ENCODE measurements at regions of chr6 and their contacts with region 1.

Region 1: DNA sequence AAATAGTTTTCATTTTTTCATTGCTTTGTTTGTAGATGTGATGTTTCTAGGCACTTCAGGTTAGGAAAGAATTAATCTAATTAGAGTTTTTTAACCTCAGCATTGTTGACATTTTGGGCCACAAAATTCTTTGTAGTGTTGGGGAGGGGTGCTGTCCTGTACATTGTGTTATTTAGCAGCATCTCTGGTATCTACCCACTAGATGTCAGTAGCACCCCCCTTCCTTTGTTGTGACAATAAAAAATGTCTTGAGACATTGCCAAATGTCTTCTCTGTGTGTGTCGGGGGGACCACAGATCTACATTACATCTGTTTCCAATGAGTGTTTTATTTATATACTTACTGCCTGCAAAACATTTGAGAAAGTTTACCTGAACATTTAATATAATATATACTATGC is 45.6 kb downstream of the EYA4 start:
- DNase-seq: peak; percentile 27
- ATAC-seq: peak; percentile 44; the same call in 1 of the 2 replicates
- H3K4me3 ChIP-seq: no peak overlapping the region
- H3K27ac ChIP-seq: no peak overlapping the region
- H3K4me1 ChIP-seq: no peaks in the 10 kb centered on the region
- H3K27me3 ChIP-seq: no peaks in the 10 kb centered on the region
- CTCF ChIP-seq: peak; percentile 48
- POLR2A ChIP-seq: no peak
- RAD21 ChIP-seq: peak; percentile 58

Region 2: DNA sequence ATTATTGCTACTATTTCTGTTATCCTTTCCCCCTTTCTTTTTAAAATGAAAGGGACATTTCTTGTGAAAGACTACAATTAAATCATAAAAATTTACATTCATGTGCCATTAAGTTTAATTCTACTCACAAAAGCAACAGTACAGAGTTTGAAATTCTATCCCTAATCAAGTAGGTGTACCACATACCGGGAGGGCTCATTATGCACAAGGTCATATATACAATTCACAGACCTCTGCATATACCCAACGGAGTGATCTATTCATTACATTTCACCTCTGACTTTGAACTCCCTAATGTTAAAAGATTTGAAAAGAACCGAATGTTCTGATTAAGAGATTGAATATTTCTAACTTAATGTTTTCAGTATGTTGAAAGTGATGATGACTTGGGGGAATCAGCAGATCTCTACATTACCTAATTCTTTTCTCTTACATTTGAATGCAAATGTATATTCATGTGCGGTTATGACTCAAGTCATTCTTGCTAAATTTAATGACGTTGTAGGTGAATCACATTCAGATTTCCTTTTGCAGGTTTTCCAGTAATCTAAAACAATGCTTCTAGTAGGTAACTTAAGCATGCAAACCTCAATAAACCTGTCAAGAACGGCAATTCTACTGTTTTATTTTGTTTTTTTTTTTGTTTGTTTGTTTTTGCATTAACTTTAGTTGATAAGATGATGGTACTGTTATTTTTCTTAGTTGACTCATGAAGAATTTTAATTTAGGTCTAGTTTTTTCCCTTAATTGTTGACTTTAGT is 38.3 kb before region 1 on chr6:
- CTCF ChIA-PET with region 1: no interaction called
- POLR2A ChIA-PET with region 1: no interaction called
- dilution Hi-C with region 1: no loop called
- in situ Hi-C with region 1: no loop called
- intact Hi-C with region 1: loop called (anchors 5 kb)
- DNase-seq: peak; percentile 96
- ATAC-seq: peak; percentile 43; the same call in 1 of the 2 replicates
- H3K4me3 ChIP-seq: no peak overlapping the region
- H3K27ac ChIP-seq: peak overlapping the region; percentile 29; the same call in 1 of the 2 replicates
- H3K4me1 ChIP-seq: peaks cover 2% of the 10 kb centered on the region; the same call in 1 of the 2 replicates
- H3K27me3 ChIP-seq: no peaks in the 10 kb centered on the region
- CTCF ChIP-seq: no peak
- POLR2A ChIP-seq: no peak
- RAD21 ChIP-seq: no peak

Region 3: DNA sequence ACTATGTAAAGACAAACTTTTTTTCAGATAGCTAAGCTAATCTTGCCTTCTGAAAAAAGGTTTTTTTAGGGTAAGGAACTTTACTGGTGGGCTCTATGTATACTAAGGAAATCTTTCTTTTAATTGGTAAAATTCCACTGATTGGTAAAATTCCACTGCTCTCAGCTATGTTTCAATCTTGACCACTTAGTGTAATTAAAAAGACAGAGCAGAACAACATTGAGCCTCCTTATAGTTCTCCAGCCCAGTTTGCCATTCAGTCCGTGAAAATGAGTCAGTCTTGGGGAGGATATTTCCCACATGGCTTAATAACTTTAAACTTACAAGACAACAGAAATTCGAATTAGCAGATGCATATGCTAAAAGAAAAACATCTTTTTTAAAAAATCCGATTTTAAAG is 47.1 kb after region 1 on chr6:
- CTCF ChIA-PET with region 1: no interaction called
- POLR2A ChIA-PET with region 1: no interaction called
- dilution Hi-C with region 1: no loop called
- in situ Hi-C with region 1: no loop called
- intact Hi-C with region 1: loop called (anchors 5 kb)
- DNase-seq: no peak
- ATAC-seq: no peak
- H3K4me3 ChIP-seq: no peak overlapping the region
- H3K27ac ChIP-seq: no peak overlapping the region
- H3K4me1 ChIP-seq: peaks cover 5% of the 10 kb centered on the region
- H3K27me3 ChIP-seq: no peaks in the 10 kb centered on the region
- CTCF ChIP-seq: no peak
- POLR2A ChIP-seq: no peak
- RAD21 ChIP-seq: no peak

Measured in IMR-90 (cell line).